ENCODE measurements at regions of chr11 and their contacts with region 1.

Region 1: GRCh38 chr11:124865921-124866583 is 820 bp downstream of the ROBO3 start:
- DNase-seq: peak; percentile 91
- H3K4me3 ChIP-seq: peak overlapping the region; percentile 43 to 64
- H3K27ac ChIP-seq: no peak overlapping the region
- H3K4me1 ChIP-seq: peaks cover 4 to 31% of the 10 kb centered on the region in 2 experiments; a peak in 1 of 4 replicates
- H3K27me3 ChIP-seq: peaks cover 78% of the 10 kb centered on the region
- CTCF ChIP-seq: peak; percentile 83
- EP300 ChIP-seq: no peak
- RAD21 ChIP-seq: peak; percentile 46

Region 2: GRCh38 chr11:124644426-124645280 is 221.4 kb before region 1 on chr11:
- CTCF ChIA-PET with region 1: interaction called, 36 read pairs
- POLR2A ChIA-PET with region 1: no interaction called
- DNase-seq: peak; percentile 75
- H3K4me3 ChIP-seq: peak overlapping the region; percentile 4 to 42; a peak in 2 of 4 replicates
- H3K27ac ChIP-seq: peak overlapping the region in 1 of 2 experiments; percentile 86; a peak in 2 of 4 replicates
- H3K4me1 ChIP-seq: peaks cover 3 to 7% of the 10 kb centered on the region in 2 experiments; a peak in 1 of 4 replicates
- H3K27me3 ChIP-seq: no peaks in the 10 kb centered on the region
- CTCF ChIP-seq: peak; percentile 84
- EP300 ChIP-seq: no peak
- RAD21 ChIP-seq: peak; percentile 82

Region 3: GRCh38 chr11:124758317-124759203 is 107.5 kb before region 1 on chr11:
- CTCF ChIA-PET with region 1: interaction called, 20 read pairs
- POLR2A ChIA-PET with region 1: no interaction called
- DNase-seq: peak; percentile 89
- H3K4me3 ChIP-seq: no peak overlapping the region; a peak in 2 of 4 replicates
- H3K27ac ChIP-seq: no peak overlapping the region
- H3K4me1 ChIP-seq: peaks cover 0 to 13% of the 10 kb centered on the region in 2 experiments; a peak in 2 of 4 replicates
- H3K27me3 ChIP-seq: no peaks in the 10 kb centered on the region
- CTCF ChIP-seq: peak; percentile 51
- EP300 ChIP-seq: no peak
- RAD21 ChIP-seq: peak; percentile 47

Region 4: GRCh38 chr11:124812876-124813275 is 53.2 kb before region 1 on chr11:
- CTCF ChIA-PET with region 1: interaction called, 10 read pairs
- POLR2A ChIA-PET with region 1: no interaction called
- DNase-seq: no peak
- H3K4me3 ChIP-seq: no peak overlapping the region
- H3K27ac ChIP-seq: no peak overlapping the region
- H3K4me1 ChIP-seq: no peaks in the 10 kb centered on the region
- H3K27me3 ChIP-seq: no peaks in the 10 kb centered on the region; the same call in 1 of the 2 replicates
- CTCF ChIP-seq: no peak
- EP300 ChIP-seq: no peak
- RAD21 ChIP-seq: no peak

Region 5: GRCh38 chr11:124855437-124855836 is 10.6 kb before region 1 on chr11:
- CTCF ChIA-PET with region 1: interaction called, 46 read pairs
- POLR2A ChIA-PET with region 1: no interaction called
- DNase-seq: no peak
- H3K4me3 ChIP-seq: no peak overlapping the region
- H3K27ac ChIP-seq: no peak overlapping the region
- H3K4me1 ChIP-seq: no peaks in the 10 kb centered on the region
- H3K27me3 ChIP-seq: peaks cover 19% of the 10 kb centered on the region; the same call in 1 of the 2 replicates
- CTCF ChIP-seq: no peak
- EP300 ChIP-seq: no peak
- RAD21 ChIP-seq: no peak

Region 6: DNA sequence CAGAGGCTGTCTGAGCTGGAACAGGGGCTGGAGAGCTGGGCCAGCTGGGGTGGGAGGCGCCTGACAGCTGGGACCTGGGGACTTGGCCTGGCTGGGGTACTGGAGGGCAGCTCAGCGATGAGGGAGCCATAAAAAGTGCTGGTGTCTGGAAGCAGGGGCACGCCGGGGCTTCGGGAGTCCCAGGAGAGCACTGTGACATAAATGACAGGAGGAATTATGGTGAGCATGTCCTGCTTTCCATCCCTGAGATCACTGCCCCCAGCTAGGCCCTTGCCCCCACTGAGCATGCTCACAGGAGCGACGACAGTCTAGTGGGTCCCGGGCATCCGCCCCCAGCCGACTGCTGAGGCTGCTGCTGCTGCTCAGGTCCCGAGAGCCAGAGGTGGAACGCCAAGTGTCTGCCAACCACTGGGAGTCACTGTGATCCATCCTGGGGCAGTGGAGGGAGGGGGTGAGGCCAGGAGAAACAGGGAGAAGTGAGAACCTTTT is 25.4 kb after region 1 on chr11:
- CTCF ChIA-PET with region 1: interaction called, 11 read pairs
- POLR2A ChIA-PET with region 1: no interaction called
- DNase-seq: peak; percentile 41
- H3K4me3 ChIP-seq: no peak overlapping the region
- H3K27ac ChIP-seq: no peak overlapping the region
- H3K4me1 ChIP-seq: no peaks in the 10 kb centered on the region
- H3K27me3 ChIP-seq: no peaks in the 10 kb centered on the region
- CTCF ChIP-seq: no peak
- EP300 ChIP-seq: no peak
- RAD21 ChIP-seq: no peak

Region 7: DNA sequence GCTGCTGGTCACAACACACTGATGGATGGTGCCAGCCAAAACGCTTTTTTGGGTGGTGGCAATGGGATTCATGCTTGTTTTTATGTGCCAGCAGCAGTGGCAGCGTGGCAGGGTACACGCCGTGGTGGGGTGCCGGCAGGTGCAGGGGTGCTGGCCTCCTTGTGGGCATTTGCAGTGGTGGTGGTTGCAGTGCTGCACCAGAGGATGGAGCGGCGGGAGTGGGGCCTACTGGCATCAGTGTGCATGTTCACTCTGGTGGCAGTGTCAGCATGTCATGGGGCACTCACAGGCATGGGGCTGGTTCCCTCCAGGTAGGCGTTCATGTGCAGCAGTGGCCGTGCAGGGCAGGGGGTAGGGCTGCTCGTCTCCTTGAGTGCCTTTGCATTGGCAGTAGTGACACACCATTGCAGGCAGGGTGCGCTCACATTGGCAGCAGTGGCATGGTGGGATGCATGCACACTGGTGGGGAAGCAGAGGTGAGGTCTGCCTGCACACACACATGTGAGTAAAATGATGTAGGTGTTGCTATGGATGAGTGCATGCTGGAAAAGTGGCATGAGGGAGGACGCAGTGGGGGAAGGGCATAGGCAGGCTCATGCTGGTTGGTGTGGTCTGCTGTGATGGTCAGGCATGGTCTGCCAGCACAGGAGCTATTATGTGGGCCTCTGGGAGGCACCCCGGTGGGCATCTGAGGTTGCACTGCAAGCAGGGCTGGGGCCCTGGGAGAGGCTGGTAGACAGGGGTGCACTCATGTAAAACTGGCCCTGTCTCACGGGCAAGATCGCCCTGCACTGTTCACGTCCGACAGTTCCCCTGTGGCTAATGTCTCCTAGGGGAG is 117.8 kb after region 1 on chr11:
- CTCF ChIA-PET with region 1: no interaction called
- POLR2A ChIA-PET with region 1: no interaction called
- DNase-seq: peak; percentile 5
- H3K4me3 ChIP-seq: no peak overlapping the region
- H3K27ac ChIP-seq: no peak overlapping the region
- H3K4me1 ChIP-seq: no peaks in the 10 kb centered on the region
- H3K27me3 ChIP-seq: no peaks in the 10 kb centered on the region
- CTCF ChIP-seq: no peak
- EP300 ChIP-seq: no peak
- RAD21 ChIP-seq: no peak

Measured in SK-N-SH (cell line).